Natural killer cell (primary cell): ENCODE measurements at regions of chr4 and their contacts with region 1.

Region 1: GRCh38 chr4:1200425-1201035 is 28.1 kb upstream of the SPON2 start:
- DNase-seq: peak in 1 of 2 donors; percentile 57
- ATAC-seq: peak in 1 of 3 donors; percentile 4
- H3K4me3 ChIP-seq: peak overlapping the region; percentile 62
- H3K4me3 Mint-ChIP-seq: peak overlapping the region; percentile 87
- H3K27ac ChIP-seq: peak overlapping the region; percentile 89
- H3K27ac Mint-ChIP-seq: peak overlapping the region; percentile 98 to 100
- H3K4me1 ChIP-seq: peaks cover 94% of the 10 kb centered on the region
- H3K4me1 Mint-ChIP-seq: peaks cover 75 to 82% of the 10 kb centered on the region in 2 donors
- H3K27me3 ChIP-seq: no peaks in the 10 kb centered on the region
- H3K27me3 Mint-ChIP-seq: no peaks in the 10 kb centered on the region
- CTCF ChIP-seq: no peak

Region 2: DNA sequence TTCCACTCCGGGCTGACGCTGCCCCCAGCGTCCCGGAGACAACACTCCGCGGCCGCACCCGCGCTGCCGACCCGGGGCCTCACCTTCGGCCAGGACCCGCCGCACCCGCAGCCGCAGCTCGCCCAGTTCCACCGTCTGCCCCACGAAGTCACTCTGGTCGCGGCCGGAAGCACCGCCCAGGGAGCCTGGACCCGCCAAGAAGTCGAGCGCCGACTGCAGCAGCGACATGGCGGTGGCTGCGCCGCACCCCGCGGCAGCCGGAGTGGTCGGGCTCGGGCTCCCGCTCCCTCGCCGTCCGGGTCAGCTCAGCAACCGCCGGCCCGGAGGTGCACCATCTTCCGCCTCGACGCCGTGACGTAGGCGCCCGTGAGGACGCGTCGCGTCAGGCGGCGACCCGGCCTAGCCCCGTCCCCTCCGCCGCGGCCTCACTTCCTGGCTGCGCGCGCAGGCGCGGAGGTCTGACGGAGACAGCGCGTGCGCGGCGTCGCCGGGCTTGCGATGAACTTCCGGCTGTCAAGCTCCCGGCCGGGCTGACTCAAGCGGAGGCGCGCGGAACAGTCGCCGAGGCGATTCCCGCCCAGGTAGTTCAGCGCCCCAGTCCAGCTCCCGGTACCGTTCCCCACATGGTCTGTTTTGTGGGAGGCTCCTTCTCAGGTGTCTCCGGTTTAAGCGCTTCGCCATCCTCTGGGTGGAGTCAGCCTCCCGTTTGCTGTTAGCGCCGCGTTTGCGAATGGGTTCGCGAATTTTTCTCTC is 268.4 kb before region 1 on chr4 and contains the starts of genes GAK and TMEM175:
- intact Hi-C with region 1: loop called (anchors 5 kb)
- DNase-seq: peak; percentile 98 to 99
- ATAC-seq: peak; percentile 84 to 95 (median 89)
- H3K4me3 ChIP-seq: peak within 1 kb of the TSS; percentile 81
- H3K4me3 Mint-ChIP-seq: peak within 1 kb of the TSS; percentile 94
- H3K27ac ChIP-seq: peak within 1 kb of the TSS; percentile 83
- H3K27ac Mint-ChIP-seq: peak within 1 kb of the TSS; percentile 89 to 95
- H3K4me1 ChIP-seq: peaks cover 45% of the 10 kb centered on the region
- H3K4me1 Mint-ChIP-seq: peaks cover 30 to 42% of the 10 kb centered on the region in 2 donors
- H3K27me3 ChIP-seq: no peaks in the 10 kb centered on the region
- H3K27me3 Mint-ChIP-seq: no peaks in the 10 kb centered on the region
- CTCF ChIP-seq: no peak
- total RNA-seq, gene GAK: 349 to 358 (median 349) TPM
- total RNA-seq, gene TMEM175: 72.8 to 79.8 (median 73.2) TPM

Region 3: GRCh38 chr4:1087371-1087770 is 113.2 kb before region 1 on chr4:
- intact Hi-C with region 1: loop called (anchors 1 kb)
- DNase-seq: peak; percentile 53 to 56
- ATAC-seq: peak; percentile 93 to 95 (median 94)
- H3K4me3 ChIP-seq: no peak overlapping the region
- H3K4me3 Mint-ChIP-seq: peak overlapping the region; percentile 72
- H3K27ac ChIP-seq: peak overlapping the region; percentile 32
- H3K27ac Mint-ChIP-seq: peak overlapping the region; percentile 88 to 97
- H3K4me1 ChIP-seq: peaks cover 11% of the 10 kb centered on the region
- H3K4me1 Mint-ChIP-seq: peaks cover 17 to 33% of the 10 kb centered on the region in 2 donors
- H3K27me3 ChIP-seq: peaks cover 2% of the 10 kb centered on the region
- H3K27me3 Mint-ChIP-seq: peaks cover 0 to 9% of the 10 kb centered on the region in 2 donors
- CTCF ChIP-seq: no peak

Region 4: GRCh38 chr4:1177274-1178141 is 23.0 kb before region 1 on chr4:
- intact Hi-C with region 1: loop called (anchors 1 kb)
- DNase-seq: peak; percentile 79 to 87
- ATAC-seq: peak; percentile 61 to 87 (median 85)
- H3K4me3 ChIP-seq: peak overlapping the region; percentile 15
- H3K4me3 Mint-ChIP-seq: peak overlapping the region; percentile 2
- H3K27ac ChIP-seq: peak overlapping the region; percentile 82
- H3K27ac Mint-ChIP-seq: peak overlapping the region; percentile 9 to 79
- H3K4me1 ChIP-seq: peaks cover 71% of the 10 kb centered on the region
- H3K4me1 Mint-ChIP-seq: peaks cover 60 to 88% of the 10 kb centered on the region in 2 donors
- H3K27me3 ChIP-seq: peaks cover 3% of the 10 kb centered on the region
- H3K27me3 Mint-ChIP-seq: no peaks in the 10 kb centered on the region
- CTCF ChIP-seq: no peak

Region 5: DNA sequence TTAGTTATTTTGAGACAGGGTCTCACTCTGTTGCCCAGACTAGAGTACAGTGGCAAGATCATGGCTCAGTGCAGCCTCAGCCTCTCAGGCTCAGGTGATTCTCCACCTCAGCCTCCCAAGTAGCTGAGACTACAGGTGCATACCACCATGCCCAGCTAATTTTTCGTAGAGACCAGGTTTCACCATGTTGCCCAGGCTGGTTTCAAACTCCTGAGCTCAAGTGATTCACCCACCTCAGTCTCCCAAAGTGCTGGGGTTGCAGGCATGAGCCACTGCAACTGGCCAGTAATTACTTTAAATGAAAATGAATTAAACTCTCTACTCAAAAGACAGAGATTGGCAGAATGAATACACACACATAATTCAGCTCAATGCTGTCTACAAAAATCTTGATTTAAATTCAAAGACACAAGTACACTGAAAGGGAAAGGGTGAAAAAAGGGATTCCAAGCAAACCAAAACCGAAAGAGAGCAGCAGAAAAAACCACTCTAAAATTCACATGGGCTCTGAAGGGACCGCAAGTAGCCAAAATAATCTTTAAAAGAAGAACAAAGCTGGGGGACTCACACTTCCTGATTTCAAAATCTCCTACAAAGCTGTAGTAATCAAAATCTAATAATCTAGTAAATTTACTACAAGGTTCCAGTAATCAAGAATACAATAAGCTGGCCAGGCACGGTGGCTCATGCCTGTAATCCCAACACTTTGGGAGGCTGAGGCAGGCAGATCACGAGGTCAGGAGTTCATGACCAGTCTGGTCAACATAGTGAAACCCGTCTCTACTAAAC is 16.4 kb before region 1 on chr4:
- intact Hi-C with region 1: loop called (anchors 1 kb)
- DNase-seq: peak; percentile 17 to 57
- ATAC-seq: peak; percentile 42 to 62 (median 57)
- H3K4me3 ChIP-seq: no peak overlapping the region
- H3K4me3 Mint-ChIP-seq: peak overlapping the region; percentile 86
- H3K27ac ChIP-seq: peak overlapping the region; percentile 68
- H3K27ac Mint-ChIP-seq: peak overlapping the region; percentile 77 to 80
- H3K4me1 ChIP-seq: peaks cover 44% of the 10 kb centered on the region
- H3K4me1 Mint-ChIP-seq: peaks cover 66 to 69% of the 10 kb centered on the region in 2 donors
- H3K27me3 ChIP-seq: no peaks in the 10 kb centered on the region
- H3K27me3 Mint-ChIP-seq: no peaks in the 10 kb centered on the region
- CTCF ChIP-seq: no peak

Region 6: DNA sequence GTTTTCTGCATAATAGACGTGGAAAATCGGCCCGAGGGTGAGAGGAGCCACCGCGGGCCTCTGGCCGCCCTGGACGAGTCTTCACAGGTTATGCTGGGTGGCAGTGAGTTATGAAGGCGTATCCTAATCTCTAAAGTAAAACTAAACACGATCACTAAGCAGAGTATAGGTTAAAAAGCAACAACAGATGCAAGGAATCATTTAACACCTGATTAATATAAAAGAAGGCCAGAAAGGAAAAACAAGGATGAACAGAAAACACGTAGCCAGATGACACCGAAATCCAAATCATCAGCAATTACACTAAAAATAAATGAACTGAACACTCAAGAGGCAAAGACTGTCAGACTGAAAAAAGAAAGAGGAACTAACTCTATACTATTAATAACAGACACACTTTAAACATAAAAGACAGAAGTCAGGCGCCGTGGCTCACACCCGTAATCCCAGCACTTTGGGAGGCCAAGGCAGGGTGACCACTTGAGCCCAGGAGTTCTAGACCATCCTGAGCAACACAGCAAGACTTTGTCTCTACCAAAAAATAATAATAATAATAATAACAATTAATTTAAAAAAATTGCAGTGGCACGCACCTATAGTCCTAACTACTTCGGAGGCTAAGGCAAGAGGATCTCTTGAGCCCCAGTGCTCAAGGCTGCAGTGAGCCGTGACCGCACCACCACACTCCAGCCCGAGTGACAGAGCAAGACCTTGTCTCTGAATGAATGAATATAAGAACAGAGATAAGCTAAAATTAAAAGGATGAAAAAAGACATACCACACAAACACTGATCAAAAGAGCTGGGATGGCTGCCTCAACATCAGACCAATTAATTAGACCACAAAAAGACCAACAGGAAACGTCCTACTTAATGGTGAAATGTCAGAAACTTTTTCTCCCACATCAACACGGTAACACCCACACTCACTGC is 18.4 kb after region 1 on chr4:
- intact Hi-C with region 1: loop called (anchors 2 kb)
- DNase-seq: no peak
- ATAC-seq: peak; percentile 43 to 53 (median 46)
- H3K4me3 ChIP-seq: no peak overlapping the region
- H3K4me3 Mint-ChIP-seq: peak overlapping the region; percentile 89
- H3K27ac ChIP-seq: peak overlapping the region; percentile 46
- H3K27ac Mint-ChIP-seq: peak overlapping the region; percentile 81 to 95
- H3K4me1 ChIP-seq: peaks cover 79% of the 10 kb centered on the region
- H3K4me1 Mint-ChIP-seq: peaks cover 45 to 59% of the 10 kb centered on the region in 2 donors
- H3K27me3 ChIP-seq: no peaks in the 10 kb centered on the region
- H3K27me3 Mint-ChIP-seq: no peaks in the 10 kb centered on the region
- CTCF ChIP-seq: no peak

Region 7: GRCh38 chr4:1249148-1249730 is 48.7 kb after region 1 on chr4:
- intact Hi-C with region 1: loop called (anchors 1 kb)
- DNase-seq: peak; percentile 86 to 94
- ATAC-seq: peak; percentile 63 to 81 (median 70)
- H3K4me3 ChIP-seq: peak overlapping the region; percentile 64
- H3K4me3 Mint-ChIP-seq: peak overlapping the region; percentile 91
- H3K27ac ChIP-seq: peak overlapping the region; percentile 96
- H3K27ac Mint-ChIP-seq: peak overlapping the region; percentile 92 to 97
- H3K4me1 ChIP-seq: peaks cover 80% of the 10 kb centered on the region
- H3K4me1 Mint-ChIP-seq: peaks cover 69 to 78% of the 10 kb centered on the region in 2 donors
- H3K27me3 ChIP-seq: no peaks in the 10 kb centered on the region
- H3K27me3 Mint-ChIP-seq: no peaks in the 10 kb centered on the region
- CTCF ChIP-seq: no peak

Region 8: GRCh38 chr4:1384675-1385372 is 184.3 kb after region 1 on chr4:
- intact Hi-C with region 1: no loop called
- DNase-seq: no peak
- ATAC-seq: no peak
- H3K4me3 ChIP-seq: no peak overlapping the region
- H3K4me3 Mint-ChIP-seq: no peak overlapping the region
- H3K27ac ChIP-seq: no peak overlapping the region
- H3K27ac Mint-ChIP-seq: no peak overlapping the region
- H3K4me1 ChIP-seq: no peaks in the 10 kb centered on the region
- H3K4me1 Mint-ChIP-seq: no peaks in the 10 kb centered on the region
- H3K27me3 ChIP-seq: no peaks in the 10 kb centered on the region
- H3K27me3 Mint-ChIP-seq: no peaks in the 10 kb centered on the region
- CTCF ChIP-seq: no peak